Panc1 (cell line): ENCODE measurements at regions of chr5 and their contacts with region 1.

Region 1: DNA sequence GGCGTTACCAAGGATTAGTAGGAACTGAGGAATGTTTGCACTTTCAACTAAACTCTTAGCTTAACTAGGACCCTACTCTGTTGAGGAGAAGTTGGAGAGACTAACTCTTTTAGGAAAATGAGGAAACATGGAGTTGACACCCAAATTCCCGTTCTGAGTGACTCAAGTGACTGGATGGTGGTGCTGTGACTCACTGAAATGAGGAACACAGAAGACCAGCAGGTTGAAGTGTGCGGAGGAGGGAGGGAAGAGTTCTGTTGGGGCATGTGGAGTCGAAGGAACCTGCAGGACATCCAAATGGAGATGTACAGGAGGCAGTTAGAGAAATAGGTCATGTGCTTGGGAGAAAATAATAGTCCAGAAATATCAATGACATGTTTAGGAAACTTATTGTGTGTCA is 8.2 kb downstream of the HEXB start:
- DNase-seq: no peak
- ATAC-seq: no peak
- H3K4me3 ChIP-seq: no peak overlapping the region
- H3K27ac ChIP-seq: no peak overlapping the region
- H3K4me1 ChIP-seq: no peaks in the 10 kb centered on the region
- H3K27me3 ChIP-seq: no peaks in the 10 kb centered on the region
- CTCF ChIP-seq: no peak

Region 2: DNA sequence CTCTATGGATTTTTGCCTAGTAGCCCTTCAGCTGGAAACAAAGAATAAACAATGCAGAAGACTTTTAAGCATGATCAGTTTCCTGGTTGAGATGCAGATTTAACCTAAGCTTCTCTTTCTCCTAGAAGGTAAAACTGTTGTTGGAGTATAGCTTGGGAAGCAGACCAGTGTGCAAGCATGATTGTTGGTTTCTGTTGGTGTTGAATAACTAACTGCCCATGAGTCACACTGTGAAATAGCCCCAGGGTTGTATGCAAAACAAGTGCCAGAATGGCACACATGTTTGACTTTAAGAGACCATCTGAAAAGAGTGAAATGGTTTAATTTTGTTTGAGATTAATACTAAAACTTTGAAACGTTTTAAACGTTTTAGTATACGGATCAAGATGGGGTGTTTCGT is 840.1 kb before region 1 on chr5:
- CTCF ChIA-PET with region 1: no interaction called
- POLR2A ChIA-PET with region 1: interaction called, 10 read pairs
- in situ Hi-C with region 1: no loop called
- intact Hi-C with region 1: no loop called
- DNase-seq: peak; percentile 8
- ATAC-seq: peak; percentile 72; the same call in 1 of the 2 replicates
- H3K4me3 ChIP-seq: no peak overlapping the region
- H3K27ac ChIP-seq: peak overlapping the region; percentile 45; the same call in 1 of the 2 replicates
- H3K4me1 ChIP-seq: peaks cover 8% of the 10 kb centered on the region
- H3K27me3 ChIP-seq: no peaks in the 10 kb centered on the region
- CTCF ChIP-seq: no peak

Region 3: GRCh38 chr5:74667396-74667795 is 25.8 kb before region 1 on chr5:
- CTCF ChIA-PET with region 1: no interaction called
- POLR2A ChIA-PET with region 1: no interaction called
- in situ Hi-C with region 1: no loop called
- intact Hi-C with region 1: no loop called
- DNase-seq: no peak
- ATAC-seq: no peak
- H3K4me3 ChIP-seq: no peak overlapping the region
- H3K27ac ChIP-seq: no peak overlapping the region
- H3K4me1 ChIP-seq: no peaks in the 10 kb centered on the region
- H3K27me3 ChIP-seq: peaks cover 2% of the 10 kb centered on the region; the same call in 1 of the 2 replicates
- CTCF ChIP-seq: no peak

Region 4: DNA sequence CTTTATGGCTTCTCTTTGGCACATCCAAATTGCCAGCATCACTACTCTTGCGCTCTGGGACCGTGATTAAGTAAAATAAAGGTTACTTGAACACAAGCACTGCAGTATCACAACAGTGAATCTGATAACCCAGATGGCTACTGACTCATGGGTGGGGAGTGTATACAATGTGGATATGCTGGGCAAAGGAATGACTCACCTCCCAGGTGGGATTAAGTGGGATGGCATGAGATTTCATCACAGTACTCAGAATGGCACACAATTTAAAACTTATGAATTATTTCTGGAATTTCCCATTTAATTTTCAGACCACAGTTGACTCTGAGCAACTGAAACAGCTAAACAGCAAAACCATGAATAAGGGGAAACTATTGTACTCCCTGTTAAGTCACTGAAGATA is 69.4 kb after region 1 on chr5:
- CTCF ChIA-PET with region 1: no interaction called
- POLR2A ChIA-PET with region 1: no interaction called
- in situ Hi-C with region 1: no loop called
- intact Hi-C with region 1: no loop called
- DNase-seq: peak; percentile 18
- ATAC-seq: peak; percentile 51
- H3K4me3 ChIP-seq: no peak overlapping the region
- H3K27ac ChIP-seq: 0 out of 2 replicates have a peak overlapping the region, but pooled peaks have one; percentile 52
- H3K4me1 ChIP-seq: peaks cover 22% of the 10 kb centered on the region
- H3K27me3 ChIP-seq: no peaks in the 10 kb centered on the region
- CTCF ChIP-seq: no peak

Region 5: GRCh38 chr5:74993743-74994142 is 300.6 kb after region 1 on chr5:
- CTCF ChIA-PET with region 1: no interaction called
- POLR2A ChIA-PET with region 1: no interaction called
- in situ Hi-C with region 1: no loop called
- intact Hi-C with region 1: no loop called
- DNase-seq: no peak
- ATAC-seq: no peak
- H3K4me3 ChIP-seq: no peak overlapping the region
- H3K27ac ChIP-seq: no peak overlapping the region
- H3K4me1 ChIP-seq: no peaks in the 10 kb centered on the region
- H3K27me3 ChIP-seq: no peaks in the 10 kb centered on the region; the same call in 1 of the 2 replicates
- CTCF ChIP-seq: no peak